Activated T-helper 1 cell treated with anti-CD3 and anti-CD28 coated beads, Interleukin-12 subunit alpha, Interleukin-12 subunit beta, Interleukin-2, Interleukin-4 antibody, amounts not matched to agents 30 ng/mL and 10 ng/mL and 1 ng/mL, durations not matched to agents 14 hours and 24 hours and 36 hours (primary cell): ENCODE measurements at regions of chr4 and their contacts with region 1.

Region 1: DNA sequence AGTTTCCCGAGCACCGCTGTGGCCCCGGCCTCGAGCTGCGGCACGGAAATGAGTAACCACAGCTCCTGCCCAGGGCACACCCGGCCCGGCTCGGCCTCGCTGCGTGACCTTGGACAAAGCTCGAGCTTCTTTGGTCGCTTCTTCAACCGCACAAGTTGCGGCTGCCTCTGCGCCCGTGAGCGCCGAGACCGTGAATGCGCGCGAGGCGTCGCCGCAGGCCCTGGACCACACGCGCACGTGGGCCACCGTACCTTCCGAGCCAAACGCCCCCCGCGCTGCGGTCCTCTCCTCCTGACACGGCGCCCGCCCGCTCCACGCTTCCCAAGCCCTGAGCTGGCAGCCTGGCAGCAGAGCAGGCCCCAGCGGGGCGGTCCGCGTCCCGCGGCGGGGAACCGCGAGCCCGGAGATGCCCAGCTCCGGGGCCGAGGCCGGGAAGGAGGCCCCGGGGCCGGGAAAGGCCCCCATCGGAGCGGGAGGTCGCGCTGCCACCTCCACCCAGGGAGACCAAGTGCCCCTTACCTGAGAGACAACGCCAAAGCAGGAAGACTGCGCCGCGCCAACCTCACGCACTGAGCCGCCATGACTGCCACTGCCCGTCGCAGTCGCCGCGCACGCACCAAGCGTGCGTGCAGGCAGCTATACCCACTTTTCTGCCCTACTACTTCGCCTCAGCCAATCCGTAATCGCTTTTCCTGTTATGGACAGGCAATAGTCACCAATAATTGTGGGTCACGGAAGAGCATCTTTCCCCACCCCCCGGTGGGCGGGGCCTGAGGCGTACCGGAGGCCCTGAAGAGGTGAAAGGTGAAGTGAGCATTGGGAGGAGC is at the start of gene GRPEL1:
- DNase-seq: peak; percentile 100
- H3K4me3 Mint-ChIP-seq: peak within 1 kb of the TSS; percentile 94
- H3K27ac Mint-ChIP-seq: peak within 1 kb of the TSS; percentile 94
- H3K4me1 Mint-ChIP-seq: peaks cover 50% of the 10 kb centered on the region
- H3K27me3 Mint-ChIP-seq: peaks cover 16% of the 10 kb centered on the region
- total RNA-seq, gene GRPEL1: 106 and 115 TPM in 2 replicates

Region 2: GRCh38 chr4:6574747-6575502 is 492.7 kb before region 1 on chr4 and contains the start of gene MAN2B2:
- intact Hi-C with region 1: loop called (anchors 10 kb)
- DNase-seq: peak; percentile 83
- H3K4me3 Mint-ChIP-seq: peak within 1 kb of the TSS; percentile 87
- H3K27ac Mint-ChIP-seq: peak within 1 kb of the TSS; percentile 71
- H3K4me1 Mint-ChIP-seq: no peaks in the 10 kb centered on the region
- H3K27me3 Mint-ChIP-seq: peaks cover 5% of the 10 kb centered on the region
- total RNA-seq, gene MAN2B2: 13.9 and 14.0 TPM in 2 replicates

Region 3: DNA sequence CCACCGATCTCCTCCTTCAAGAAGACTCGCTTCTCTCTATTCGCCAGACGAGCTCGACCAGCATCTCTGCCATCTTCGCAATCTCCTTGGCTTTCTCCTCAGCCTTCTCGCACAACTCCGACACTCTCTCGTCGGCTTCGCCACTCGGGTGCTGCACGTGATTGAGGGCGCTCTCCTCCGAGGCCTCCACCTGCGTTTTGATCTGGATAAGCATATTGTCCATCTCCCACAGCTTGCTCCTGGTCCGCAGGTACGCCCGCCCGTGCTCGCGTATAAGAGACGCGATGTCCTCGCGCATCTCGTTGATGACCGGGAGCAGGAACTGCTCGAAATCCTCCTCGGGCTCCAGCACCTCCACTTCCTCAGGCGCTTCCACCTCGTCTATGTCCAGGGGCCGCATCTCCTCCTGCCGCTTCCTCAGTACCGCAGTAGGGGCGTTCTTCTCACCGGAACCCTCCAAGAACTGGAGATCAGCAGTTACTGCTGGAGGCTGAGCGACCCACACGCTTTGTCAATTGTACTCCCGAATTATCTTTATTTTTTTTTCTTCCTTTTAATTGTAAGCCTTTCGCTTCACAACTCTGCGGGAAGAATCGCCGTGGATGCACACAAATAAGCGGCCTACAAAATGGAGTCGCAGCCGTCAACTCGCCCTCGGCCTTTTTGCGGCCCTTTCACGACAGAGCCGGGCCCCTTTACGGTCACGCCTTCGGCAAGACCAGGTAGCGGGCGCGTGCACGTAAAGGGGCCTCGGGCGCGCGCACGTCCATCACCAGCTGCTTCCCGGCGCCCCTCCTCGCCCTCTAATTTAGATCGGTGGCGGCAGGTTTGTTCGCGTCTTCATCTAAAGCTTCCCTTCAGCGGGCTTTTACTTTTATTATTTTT is 358.2 kb before region 1 on chr4 and contains the start of gene MRFAP1L1:
- intact Hi-C with region 1: loop called (anchors 1 kb)
- DNase-seq: peak; percentile 95
- H3K4me3 Mint-ChIP-seq: peak within 1 kb of the TSS; percentile 98
- H3K27ac Mint-ChIP-seq: peak within 1 kb of the TSS; percentile 95
- H3K4me1 Mint-ChIP-seq: peaks cover 62% of the 10 kb centered on the region
- H3K27me3 Mint-ChIP-seq: peaks cover 3% of the 10 kb centered on the region
- total RNA-seq, gene MRFAP1L1: 51.7 and 53.9 TPM in 2 replicates

Region 4: GRCh38 chr4:6783053-6783981 is 284.3 kb before region 1 on chr4:
- intact Hi-C with region 1: loop called (anchors 1 kb)
- DNase-seq: peak; percentile 86
- H3K4me3 Mint-ChIP-seq: peak overlapping the region; percentile 85
- H3K27ac Mint-ChIP-seq: peak overlapping the region; percentile 86
- H3K4me1 Mint-ChIP-seq: peaks cover 57% of the 10 kb centered on the region
- H3K27me3 Mint-ChIP-seq: no peaks in the 10 kb centered on the region

Region 5: GRCh38 chr4:6909073-6909965 is 158.3 kb before region 1 on chr4 and contains the start of gene TBC1D14:
- intact Hi-C with region 1: loop called (anchors 1 kb)
- DNase-seq: peak; percentile 82
- H3K4me3 Mint-ChIP-seq: peak within 1 kb of the TSS; percentile 95
- H3K27ac Mint-ChIP-seq: peak within 1 kb of the TSS; percentile 94
- H3K4me1 Mint-ChIP-seq: peaks cover 66% of the 10 kb centered on the region
- H3K27me3 Mint-ChIP-seq: no peaks in the 10 kb centered on the region
- total RNA-seq, gene TBC1D14: 58.1 and 59.7 TPM in 2 replicates

Region 6: GRCh38 chr4:7042697-7043464 is 24.8 kb before region 1 on chr4 and contains the start of gene TADA2B:
- intact Hi-C with region 1: loop called (anchors 1 kb)
- DNase-seq: peak; percentile 93
- H3K4me3 Mint-ChIP-seq: peak within 1 kb of the TSS; percentile 95
- H3K27ac Mint-ChIP-seq: peak within 1 kb of the TSS; percentile 86
- H3K4me1 Mint-ChIP-seq: peaks cover 48% of the 10 kb centered on the region
- H3K27me3 Mint-ChIP-seq: peaks cover 8% of the 10 kb centered on the region
- total RNA-seq, gene TADA2B: 15.2 and 16.8 TPM in 2 replicates